ENCODE measurements at regions of chr4 and their contacts with region 1.

Region 1: DNA sequence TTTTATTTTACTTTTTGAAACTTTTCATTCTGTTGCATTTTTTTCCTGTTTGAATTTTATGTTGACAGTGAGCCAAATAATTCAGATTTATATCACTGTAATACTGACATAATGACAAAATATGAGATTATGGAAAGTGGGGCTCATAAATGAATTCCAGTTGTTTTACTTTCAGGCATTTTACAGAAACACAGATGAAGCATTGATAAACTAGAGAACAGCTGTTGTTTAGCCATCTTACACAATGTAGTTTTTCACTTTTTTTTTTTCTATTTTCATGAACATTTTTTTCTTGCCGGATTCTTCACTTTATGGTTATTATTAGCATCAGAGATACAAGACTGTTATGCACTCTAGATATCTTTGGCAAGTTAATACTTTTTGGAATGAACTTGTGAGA is 91.7 kb upstream of the PAQR3 start:
- DNase-seq: no peak
- H3K4me3 ChIP-seq: no peak overlapping the region
- H3K27ac ChIP-seq: no peak overlapping the region
- H3K4me1 ChIP-seq: no peaks in the 10 kb centered on the region
- H3K27me3 ChIP-seq: no peaks in the 10 kb centered on the region
- CTCF ChIP-seq: no peak
- EP300 ChIP-seq: no peak
- POLR2A ChIP-seq: no peak

Region 2: DNA sequence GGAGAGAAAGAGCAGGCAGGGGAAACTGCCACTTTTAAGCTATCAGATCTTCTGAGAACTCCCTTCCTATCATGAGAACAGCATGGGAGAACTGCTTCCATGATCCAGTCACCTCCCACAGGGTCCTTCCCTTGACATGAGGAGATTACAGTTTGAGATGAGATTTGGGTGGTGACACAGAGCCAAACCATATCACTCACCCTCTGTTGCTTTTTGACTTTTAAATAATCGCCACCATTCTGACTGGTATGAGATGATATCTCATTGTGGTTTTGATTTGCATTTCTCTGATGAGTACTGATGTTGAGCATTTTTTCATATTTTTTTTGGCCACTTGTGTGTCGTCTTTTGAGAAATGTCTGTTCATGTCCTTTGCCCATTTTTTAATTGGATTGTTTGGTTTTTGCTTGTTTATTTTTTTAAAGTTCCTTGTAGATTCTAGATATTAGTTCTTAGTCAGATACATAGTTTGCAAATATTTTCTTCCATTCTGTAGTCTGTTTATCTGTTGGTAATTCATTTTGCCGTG is 85.3 kb before region 1 on chr4:
- intact Hi-C with region 1: no loop called
- DNase-seq: no peak
- H3K4me3 ChIP-seq: no peak overlapping the region
- H3K27ac ChIP-seq: no peak overlapping the region
- H3K4me1 ChIP-seq: no peaks in the 10 kb centered on the region
- H3K27me3 ChIP-seq: no peaks in the 10 kb centered on the region
- CTCF ChIP-seq: no peak
- EP300 ChIP-seq: no peak
- POLR2A ChIP-seq: no peak

Region 3: DNA sequence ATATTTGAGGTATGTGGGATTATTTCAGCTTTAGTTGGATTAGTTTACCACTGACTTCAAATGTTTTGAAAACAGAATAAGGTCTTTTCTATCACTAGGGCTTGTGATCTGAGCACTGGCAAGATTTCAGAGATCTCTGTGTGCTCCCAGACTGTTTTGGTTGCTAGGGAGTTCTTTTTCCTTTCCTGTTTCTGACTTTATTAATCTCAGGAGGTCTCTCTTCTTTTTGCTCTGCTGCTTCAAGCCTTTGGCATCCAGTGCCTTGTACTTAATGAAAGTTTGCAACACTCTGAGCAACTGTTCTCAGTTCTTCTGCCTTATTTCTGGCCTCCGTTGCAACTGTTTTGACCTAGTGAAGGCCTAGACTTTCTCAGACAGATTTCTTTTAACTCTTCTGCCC is 59.6 kb before region 1 on chr4:
- intact Hi-C with region 1: loop called (anchors 5 kb)
- DNase-seq: peak; percentile 70
- H3K4me3 ChIP-seq: no peak overlapping the region
- H3K27ac ChIP-seq: peak overlapping the region in 3 of 4 donors; percentile 40 to 79 (median 47)
- H3K4me1 ChIP-seq: peaks cover 0 to 13% (median 0%) of the 10 kb centered on the region in 4 donors
- H3K27me3 ChIP-seq: no peaks in the 10 kb centered on the region
- CTCF ChIP-seq: no peak
- EP300 ChIP-seq: no peak
- POLR2A ChIP-seq: no peak

Region 4: DNA sequence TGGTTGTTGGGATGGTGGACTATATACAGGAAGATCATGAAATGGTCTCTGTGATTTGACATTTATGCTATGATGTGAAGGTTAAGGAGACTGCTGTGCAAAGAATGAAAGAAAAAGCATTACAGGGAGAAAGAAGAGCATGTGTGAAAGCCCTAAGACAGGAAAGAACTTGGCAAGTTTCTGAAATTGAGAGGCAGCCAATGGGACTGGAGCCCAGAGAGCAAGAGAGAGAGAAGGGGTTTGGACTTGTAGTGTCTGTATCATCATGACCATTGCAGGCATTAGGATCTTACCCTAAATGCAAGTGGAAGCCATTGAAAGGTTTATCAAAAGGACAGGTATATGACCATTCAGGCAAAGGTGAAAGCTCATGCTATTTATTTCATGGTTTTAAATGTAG is 147.8 kb after region 1 on chr4:
- intact Hi-C with region 1: no loop called
- DNase-seq: peak; percentile 81
- H3K4me3 ChIP-seq: no peak overlapping the region
- H3K27ac ChIP-seq: peak overlapping the region in 2 of 4 donors; percentile 6
- H3K4me1 ChIP-seq: peaks cover 0 to 41% (median 27%) of the 10 kb centered on the region in 4 donors
- H3K27me3 ChIP-seq: no peaks in the 10 kb centered on the region
- CTCF ChIP-seq: no peak
- EP300 ChIP-seq: no peak
- POLR2A ChIP-seq: no peak

Measured in sigmoid colon (tissue), 7 donors.